Spleen (tissue), 13 donors: ENCODE measurements at regions of chr21 and their contacts with region 1.

Region 1: GRCh38 chr21:14306151-14306907 is 76.6 kb downstream of the HSPA13 start:
- DNase-seq: no peak
- H3K4me3 ChIP-seq: no peak overlapping the region
- H3K27ac ChIP-seq: no peak overlapping the region
- H3K4me1 ChIP-seq: peaks cover 0 to 5% (median 0%) of the 10 kb centered on the region in 6 donors
- H3K27me3 ChIP-seq: no peaks in the 10 kb centered on the region
- CTCF ChIP-seq: peak in 1 of 11 experiments; percentile 12
- POLR2A ChIP-seq: no peak

Region 2: GRCh38 chr21:14012409-14012808 is 293.9 kb before region 1 on chr21:
- intact Hi-C with region 1: no loop called
- DNase-seq: no peak
- H3K4me3 ChIP-seq: no peak overlapping the region
- H3K27ac ChIP-seq: no peak overlapping the region
- H3K4me1 ChIP-seq: no peaks in the 10 kb centered on the region
- H3K27me3 ChIP-seq: no peaks in the 10 kb centered on the region
- CTCF ChIP-seq: no peak
- POLR2A ChIP-seq: no peak

Region 3: DNA sequence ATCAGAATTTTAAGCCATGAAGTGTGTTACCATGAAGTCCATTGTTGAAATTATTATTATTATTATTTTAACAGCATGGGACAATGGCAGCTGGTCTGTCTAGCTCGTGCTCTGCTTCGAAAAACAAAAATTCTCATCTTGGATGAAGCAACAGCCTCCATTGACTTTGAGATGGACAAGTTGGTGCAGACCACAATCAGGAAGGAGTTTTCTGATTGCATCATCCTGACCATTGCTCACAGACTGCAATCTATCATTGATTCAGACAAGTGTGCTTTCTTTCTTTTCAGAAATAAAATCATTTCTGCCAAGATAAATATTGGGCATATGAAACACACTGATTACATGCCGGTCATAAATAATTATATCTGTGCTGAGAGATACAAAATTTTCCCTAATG is 55.6 kb after region 1 on chr21:
- intact Hi-C with region 1: loop called (anchors 10 kb)
- DNase-seq: no peak
- H3K4me3 ChIP-seq: no peak overlapping the region
- H3K27ac ChIP-seq: no peak overlapping the region
- H3K4me1 ChIP-seq: no peaks in the 10 kb centered on the region
- H3K27me3 ChIP-seq: no peaks in the 10 kb centered on the region
- CTCF ChIP-seq: no peak
- POLR2A ChIP-seq: no peak